Activated naive CD4-positive, alpha-beta T cell treated with anti-CD3 and anti-CD28 coated beads for 36 hours (primary cell): ENCODE measurements at regions of chr5 and their contacts with region 1.

Region 1: GRCh38 chr5:172283020-172283861 is at the start of gene UBTD2:
- DNase-seq: peak; percentile 70
- H3K4me3 Mint-ChIP-seq: peak within 1 kb of the TSS; percentile 81
- H3K27ac Mint-ChIP-seq: no peak within 1 kb of the TSS
- H3K4me1 Mint-ChIP-seq: peaks cover 19% of the 10 kb centered on the region
- H3K27me3 Mint-ChIP-seq: no peaks in the 10 kb centered on the region
- total RNA-seq, gene UBTD2: 2.3 to 2.6 TPM

Region 2: GRCh38 chr5:171418316-171418981 is 864.8 kb before region 1 on chr5:
- CTCF ChIA-PET with region 1: no interaction called
- intact Hi-C with region 1: loop called (anchors 10 kb)
- DNase-seq: peak; percentile 71
- H3K4me3 Mint-ChIP-seq: peak overlapping the region; percentile 53
- H3K27ac Mint-ChIP-seq: no peak overlapping the region
- H3K4me1 Mint-ChIP-seq: peaks cover 13% of the 10 kb centered on the region
- H3K27me3 Mint-ChIP-seq: peaks cover 25% of the 10 kb centered on the region

Region 3: GRCh38 chr5:172006321-172007174 is 276.7 kb before region 1 on chr5 and contains the start of gene FBXW11:
- CTCF ChIA-PET with region 1: interaction called, 3 read pairs
- intact Hi-C with region 1: loop called (anchors 2 kb)
- DNase-seq: peak; percentile 96
- H3K4me3 Mint-ChIP-seq: peak within 1 kb of the TSS; percentile 96
- H3K27ac Mint-ChIP-seq: peak within 1 kb of the TSS; percentile 99
- H3K4me1 Mint-ChIP-seq: peaks cover 46% of the 10 kb centered on the region
- H3K27me3 Mint-ChIP-seq: no peaks in the 10 kb centered on the region
- total RNA-seq, gene FBXW11: 32.8 to 35.5 TPM

Region 4: GRCh38 chr5:172065501-172065990 is 217.7 kb before region 1 on chr5:
- CTCF ChIA-PET with region 1: interaction called, 4 read pairs
- intact Hi-C with region 1: loop called (anchors 2 kb)
- DNase-seq: no peak
- H3K4me3 Mint-ChIP-seq: no peak overlapping the region
- H3K27ac Mint-ChIP-seq: no peak overlapping the region
- H3K4me1 Mint-ChIP-seq: peaks cover 56% of the 10 kb centered on the region
- H3K27me3 Mint-ChIP-seq: no peaks in the 10 kb centered on the region

Region 5: DNA sequence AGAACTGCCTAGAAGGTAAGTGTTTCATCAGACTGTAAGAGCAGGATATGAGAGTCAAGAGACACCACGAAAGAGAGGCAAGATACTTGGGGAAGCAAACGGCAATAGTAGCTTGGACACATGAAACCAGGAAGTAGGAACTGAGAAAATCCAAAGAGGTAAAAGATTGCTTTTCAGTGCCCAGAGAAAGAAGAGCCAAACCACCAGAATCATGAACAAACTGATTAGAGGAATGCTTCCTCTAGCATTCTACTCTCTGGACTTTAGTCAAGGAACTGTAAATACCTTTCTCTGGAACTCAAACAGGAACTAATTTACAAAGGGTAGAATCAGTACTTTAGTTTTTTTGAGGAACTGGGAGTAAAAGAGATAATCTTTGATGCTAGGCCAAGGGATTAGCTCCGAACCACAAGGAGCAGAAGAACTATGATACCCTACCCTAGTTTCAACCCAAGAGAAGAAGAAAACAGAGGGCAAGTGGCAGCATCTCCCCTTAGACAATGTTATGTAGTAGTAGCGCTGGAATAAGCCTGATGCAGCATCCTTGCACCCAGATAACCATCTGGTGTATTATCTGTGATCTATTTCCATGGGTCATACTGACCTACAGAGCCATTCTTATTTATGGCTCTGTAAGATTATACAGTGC is 48.0 kb before region 1 on chr5:
- CTCF ChIA-PET with region 1: interaction called, 4 read pairs
- intact Hi-C with region 1: loop called (anchors 1 kb)
- DNase-seq: no peak
- H3K4me3 Mint-ChIP-seq: no peak overlapping the region
- H3K27ac Mint-ChIP-seq: no peak overlapping the region
- H3K4me1 Mint-ChIP-seq: peaks cover 38% of the 10 kb centered on the region
- H3K27me3 Mint-ChIP-seq: no peaks in the 10 kb centered on the region

Region 6: DNA sequence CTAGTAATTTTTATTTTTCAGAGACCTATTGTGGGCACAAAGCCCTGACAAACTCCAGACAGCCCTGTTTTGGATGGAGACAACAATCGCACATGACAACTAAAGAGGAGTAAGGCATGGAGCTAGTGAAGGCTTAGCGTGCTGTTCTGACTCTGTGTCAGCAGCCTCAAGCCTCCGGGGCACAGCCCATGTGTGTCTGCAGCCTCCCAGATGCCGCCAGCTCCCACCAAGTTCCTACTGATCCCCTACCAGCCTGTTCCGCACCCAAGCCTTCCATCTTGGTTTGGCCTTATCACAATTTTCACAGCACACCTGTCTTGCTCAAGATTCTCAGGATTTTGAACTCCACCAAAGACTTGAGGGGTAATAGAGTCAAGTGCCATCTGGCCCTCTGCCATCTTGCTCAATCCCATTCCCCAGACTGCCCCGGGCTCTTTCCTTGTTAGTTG is 241.4 kb after region 1 on chr5:
- CTCF ChIA-PET with region 1: no interaction called
- intact Hi-C with region 1: no loop called
- DNase-seq: no peak
- H3K4me3 Mint-ChIP-seq: no peak overlapping the region
- H3K27ac Mint-ChIP-seq: no peak overlapping the region
- H3K4me1 Mint-ChIP-seq: no peaks in the 10 kb centered on the region
- H3K27me3 Mint-ChIP-seq: peaks cover 10% of the 10 kb centered on the region